Activated CD4-positive, alpha-beta T cell treated with anti-CD3 and anti-CD28 coated beads, Interleukin-2, amount 10 ng/mL, durations not matched to agents 24 days and 14 days (primary cell): ENCODE measurements at regions of chr17 and their contacts with region 1.

Region 1: DNA sequence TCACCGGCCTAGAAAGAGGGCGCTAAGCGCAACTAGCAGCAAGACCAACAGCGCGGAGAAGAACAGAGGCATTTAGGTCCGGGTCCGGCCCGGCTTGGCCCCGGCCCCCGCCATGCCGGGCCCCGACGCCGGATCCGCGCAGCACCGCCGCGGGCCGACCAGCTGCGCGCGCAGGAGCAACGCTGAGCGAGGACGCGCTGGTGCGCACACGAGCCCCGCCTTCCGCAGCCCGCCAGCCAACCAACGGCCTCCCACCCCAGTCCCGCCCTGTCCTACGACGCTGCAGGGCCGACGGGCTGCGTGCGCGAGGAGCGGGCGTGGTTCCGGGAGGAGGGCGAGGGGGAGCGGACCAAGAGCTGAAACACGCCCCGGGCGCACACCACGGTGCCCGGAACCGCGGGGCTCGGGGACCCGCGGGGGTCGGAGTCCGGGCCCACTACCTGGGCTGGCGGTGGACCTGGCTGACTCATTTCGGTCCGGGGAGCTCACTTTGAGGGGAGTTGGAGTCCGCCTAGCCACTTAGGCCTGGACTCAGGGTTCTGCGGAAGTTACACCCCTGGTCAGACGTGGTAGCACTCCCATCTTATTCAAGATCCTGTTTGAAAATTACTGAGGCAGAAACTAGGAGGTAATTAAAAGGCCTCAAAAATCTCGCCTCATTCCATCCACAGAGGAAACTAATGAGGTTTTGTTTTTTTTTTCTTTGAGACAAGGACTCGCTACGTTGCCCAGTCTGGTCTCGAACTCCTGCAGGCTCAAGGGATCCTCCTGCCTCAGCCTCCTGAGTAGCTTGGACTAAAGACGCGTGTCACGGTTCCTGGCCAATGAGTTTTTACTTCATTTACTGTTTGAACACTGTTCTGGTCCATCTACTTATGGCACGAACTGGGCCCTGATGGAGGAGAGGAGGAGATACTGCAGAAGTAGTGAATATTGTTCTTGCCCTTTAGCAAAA is at the start of gene BLTP2:
- DNase-seq: peak; percentile 99
- H3K4me3 Mint-ChIP-seq: peak within 1 kb of the TSS; percentile 93
- H3K27ac Mint-ChIP-seq: peak within 1 kb of the TSS; percentile 91
- H3K4me1 Mint-ChIP-seq: peaks cover 36% of the 10 kb centered on the region
- H3K27me3 Mint-ChIP-seq: no peaks in the 10 kb centered on the region
- total RNA-seq, gene BLTP2: 220 and 225 TPM in 2 replicates

Region 2: GRCh38 chr17:28552246-28552999 is 92.8 kb before region 1 on chr17 and contains the start of gene UNC119:
- intact Hi-C with region 1: loop called (anchors 5 kb)
- DNase-seq: peak; percentile 94
- H3K4me3 Mint-ChIP-seq: peak within 1 kb of the TSS; percentile 96
- H3K27ac Mint-ChIP-seq: peak within 1 kb of the TSS; percentile 90
- H3K4me1 Mint-ChIP-seq: peaks cover 53% of the 10 kb centered on the region
- H3K27me3 Mint-ChIP-seq: no peaks in the 10 kb centered on the region
- total RNA-seq, gene UNC119: 59.8 and 60.2 TPM in 2 replicates

Region 3: DNA sequence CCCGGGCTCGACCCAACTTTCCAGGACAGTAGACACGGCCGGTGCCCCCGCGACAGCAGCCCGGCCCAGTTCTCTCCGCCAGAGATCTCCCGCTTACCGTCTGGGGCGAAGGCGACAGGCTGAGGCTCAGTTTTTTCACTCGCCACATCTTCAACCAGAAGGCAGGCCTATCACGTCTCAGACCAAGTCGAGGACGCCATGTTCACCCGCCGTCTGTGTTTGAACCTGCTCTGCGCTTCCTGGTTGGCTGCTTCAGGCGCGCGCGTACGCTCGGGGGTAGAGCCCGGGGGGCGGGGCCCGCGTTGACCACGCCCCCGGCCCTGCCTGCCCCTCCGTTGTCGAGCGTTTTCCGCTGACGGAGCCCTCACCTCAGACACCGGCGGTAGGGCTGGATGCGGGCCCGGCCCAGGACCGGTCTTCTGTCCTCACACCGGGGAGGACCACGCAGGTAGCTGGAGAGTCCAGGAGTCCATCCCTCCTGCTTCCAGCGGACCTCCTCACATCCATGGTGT is 46.4 kb before region 1 on chr17 and contains the start of gene SPAG5:
- intact Hi-C with region 1: loop called (anchors 1 kb)
- DNase-seq: peak; percentile 99
- H3K4me3 Mint-ChIP-seq: peak within 1 kb of the TSS; percentile 91
- H3K27ac Mint-ChIP-seq: peak within 1 kb of the TSS; percentile 98
- H3K4me1 Mint-ChIP-seq: peaks cover 22% of the 10 kb centered on the region
- H3K27me3 Mint-ChIP-seq: no peaks in the 10 kb centered on the region
- total RNA-seq, gene SPAG5: 89.6 and 91.3 TPM in 2 replicates

Region 4: GRCh38 chr17:28661635-28662537 is 16.6 kb after region 1 on chr17 and contains the starts of genes SDF2 and SUPT6H:
- intact Hi-C with region 1: loop called (anchors 1 kb)
- DNase-seq: peak; percentile 98
- H3K4me3 Mint-ChIP-seq: peak within 1 kb of the TSS; percentile 99
- H3K27ac Mint-ChIP-seq: peak within 1 kb of the TSS; percentile 97
- H3K4me1 Mint-ChIP-seq: peaks cover 43% of the 10 kb centered on the region
- H3K27me3 Mint-ChIP-seq: no peaks in the 10 kb centered on the region
- total RNA-seq, gene SDF2: 43.8 and 46.2 TPM in 2 replicates
- total RNA-seq, gene SUPT6H: 100 and 108 TPM in 2 replicates

Region 5: GRCh38 chr17:28710861-28711722 is 65.8 kb after region 1 on chr17:
- intact Hi-C with region 1: loop called (anchors 2 kb)
- DNase-seq: peak; percentile 99
- H3K4me3 Mint-ChIP-seq: peak overlapping the region; percentile 91
- H3K27ac Mint-ChIP-seq: peak overlapping the region; percentile 95
- H3K4me1 Mint-ChIP-seq: peaks cover 17% of the 10 kb centered on the region
- H3K27me3 Mint-ChIP-seq: peaks cover 15% of the 10 kb centered on the region

Region 6: GRCh38 chr17:28718334-28719030 is 73.2 kb after region 1 on chr17:
- intact Hi-C with region 1: loop called (anchors 1 kb)
- DNase-seq: no peak
- H3K4me3 Mint-ChIP-seq: peak overlapping the region; percentile 82
- H3K27ac Mint-ChIP-seq: peak overlapping the region; percentile 86
- H3K4me1 Mint-ChIP-seq: peaks cover 39% of the 10 kb centered on the region
- H3K27me3 Mint-ChIP-seq: peaks cover 28% of the 10 kb centered on the region

Region 7: DNA sequence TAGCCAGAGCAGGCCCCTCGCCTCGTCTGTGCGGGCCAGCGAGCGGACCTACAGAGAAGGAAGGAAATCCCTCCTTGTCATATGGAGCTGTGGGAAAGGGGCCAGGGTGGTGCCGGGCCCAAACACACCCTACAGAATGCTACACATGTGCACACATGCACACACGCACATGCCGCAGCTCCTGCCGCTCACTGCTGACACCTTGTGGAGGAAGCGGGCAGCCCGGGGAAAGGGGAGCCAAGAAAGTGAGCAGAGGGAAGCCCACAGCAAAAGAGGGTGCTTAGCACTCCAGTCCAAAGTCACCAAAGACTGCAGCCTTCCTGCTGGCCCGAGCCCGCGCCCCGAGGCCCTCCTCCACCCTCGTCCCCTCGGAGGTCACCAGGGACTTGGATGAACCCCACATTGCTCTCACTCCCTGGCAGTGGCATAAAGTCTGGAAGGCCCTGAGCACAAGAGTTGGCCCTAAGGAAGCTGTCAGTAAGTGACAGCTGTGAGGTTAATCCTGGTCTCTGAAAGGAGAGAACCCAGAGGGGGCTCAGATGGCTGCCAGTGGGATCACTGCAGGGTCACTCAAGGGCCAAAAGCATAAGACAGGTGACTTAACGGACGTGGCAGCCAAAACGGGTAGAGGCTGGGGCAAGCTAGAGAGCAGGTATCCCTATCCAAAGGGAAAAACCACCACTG is 466.7 kb after region 1 on chr17:
- intact Hi-C with region 1: loop called (anchors 10 kb)
- DNase-seq: peak; percentile 91
- H3K4me3 Mint-ChIP-seq: no peak overlapping the region
- H3K27ac Mint-ChIP-seq: no peak overlapping the region
- H3K4me1 Mint-ChIP-seq: peaks cover 5% of the 10 kb centered on the region
- H3K27me3 Mint-ChIP-seq: no peaks in the 10 kb centered on the region